Dendritic cell treated with granulocyte-macrophage colony-stimulating factor and Interleukin-4, amounts not matched to agents 40 ng/mL and 50 ng/mL, for 4 days (primary cell): ENCODE measurements at regions of chr16 and their contacts with region 1.

Region 1: DNA sequence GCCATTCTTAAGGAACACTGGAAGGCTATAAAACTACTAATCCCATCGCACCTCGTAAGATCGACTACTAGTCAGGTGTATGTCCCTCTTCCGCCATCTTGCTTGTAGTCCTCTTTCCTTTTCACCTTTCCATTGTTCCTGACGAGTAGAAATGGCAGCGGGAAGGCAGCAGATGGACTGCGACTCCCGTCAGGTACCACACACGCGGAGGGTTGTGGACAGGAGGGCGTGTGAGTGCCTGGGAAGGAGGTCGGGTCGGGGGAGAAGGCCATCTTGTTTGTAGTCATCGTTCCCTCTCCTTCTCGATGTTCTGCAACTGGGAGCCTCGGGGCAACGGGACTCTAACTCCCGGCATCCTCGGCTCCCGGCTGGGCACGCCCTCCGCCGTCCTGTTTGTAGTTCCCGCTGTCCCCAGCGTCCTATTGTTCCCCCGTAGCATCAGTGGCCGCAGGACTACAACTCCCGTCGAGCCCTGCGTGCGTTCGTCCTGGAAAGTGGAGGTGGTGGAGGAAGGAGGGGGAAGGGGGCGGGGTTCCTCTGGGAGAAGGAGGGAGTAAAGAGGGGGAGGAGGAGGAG is 324 bp upstream of the FBXL19 start:
- H3K4me3 Mint-ChIP-seq: peak overlapping the region; percentile 90
- H3K27ac Mint-ChIP-seq: peak overlapping the region; percentile 96
- H3K4me1 Mint-ChIP-seq: peaks cover 50% of the 10 kb centered on the region
- H3K27me3 Mint-ChIP-seq: no peaks in the 10 kb centered on the region

Region 2: DNA sequence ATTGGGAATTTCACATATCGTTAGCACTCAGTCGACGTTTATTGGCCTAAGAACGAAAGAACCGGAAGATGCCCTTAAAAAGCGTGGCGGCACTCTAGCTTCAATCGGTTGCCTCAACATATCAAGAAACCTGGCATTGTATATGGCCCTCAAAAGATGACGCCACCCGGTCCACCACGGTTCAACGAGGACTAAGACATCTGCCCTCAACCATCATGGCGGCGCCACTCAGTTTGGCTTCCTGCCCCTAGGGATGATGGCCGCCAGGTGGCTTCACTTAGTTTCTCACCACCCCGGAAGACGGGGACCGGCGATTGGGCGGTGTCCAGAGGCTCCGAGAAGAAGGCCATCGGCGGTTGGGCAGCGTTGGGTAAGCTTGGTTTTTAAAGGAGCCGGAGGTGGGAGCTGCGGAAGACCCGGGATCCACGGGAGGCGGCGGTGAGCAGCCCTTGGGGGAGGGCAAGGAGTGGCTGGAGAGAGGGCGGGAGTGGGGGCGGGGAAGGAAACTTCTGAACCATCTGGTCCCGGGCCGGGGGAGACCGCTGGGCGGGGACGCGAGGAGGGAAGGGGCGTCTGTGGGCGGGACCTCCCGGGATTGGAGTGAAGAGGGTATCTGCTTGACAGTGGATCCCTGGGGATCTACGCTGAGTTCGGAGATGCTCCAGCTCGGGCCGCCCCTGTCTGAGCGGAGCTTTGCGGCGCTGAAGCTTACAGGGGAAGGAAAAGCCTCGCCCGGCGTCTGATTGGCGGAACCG is 272.5 kb before region 1 on chr16 and contains the start of gene PRR14:
- intact Hi-C with region 1: loop called (anchors 2 kb)
- H3K4me3 Mint-ChIP-seq: peak within 1 kb of the TSS; percentile 90
- H3K27ac Mint-ChIP-seq: peak within 1 kb of the TSS; percentile 99
- H3K4me1 Mint-ChIP-seq: peaks cover 43% of the 10 kb centered on the region
- H3K27me3 Mint-ChIP-seq: no peaks in the 10 kb centered on the region

Region 3: DNA sequence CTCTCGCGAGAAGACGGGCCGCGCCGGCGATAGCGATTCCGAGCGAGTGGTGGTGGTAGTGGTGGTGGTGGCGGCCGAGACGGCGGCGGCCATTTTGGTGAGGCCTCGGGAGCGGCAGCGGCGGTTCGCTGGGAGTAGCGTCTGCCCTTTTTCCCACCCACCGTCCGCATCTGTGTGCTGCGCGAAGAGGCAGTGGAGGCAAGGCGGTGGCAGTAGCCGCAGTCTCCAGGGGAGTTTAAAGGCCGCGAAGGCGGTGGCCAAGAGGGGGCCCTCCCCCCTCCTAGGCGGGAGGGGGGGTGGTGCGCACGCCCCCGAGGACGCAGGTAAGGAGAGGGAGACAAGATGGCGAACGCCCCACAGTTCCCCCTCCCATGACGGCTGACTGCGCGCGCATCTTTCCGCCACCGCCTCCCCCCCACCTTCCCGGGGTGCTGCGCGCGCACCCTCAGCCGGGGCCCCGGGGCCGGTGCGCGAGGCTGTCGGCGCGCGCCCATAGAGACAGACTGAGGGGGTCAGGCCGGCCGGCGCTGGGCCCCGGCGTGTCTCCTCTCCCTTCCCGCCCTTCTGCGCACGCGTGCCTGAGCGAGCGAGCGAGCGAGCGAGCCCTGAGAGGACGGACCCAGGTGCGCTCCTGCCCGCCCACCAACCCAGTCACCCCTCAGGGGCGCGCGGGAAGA is 224.8 kb before region 1 on chr16:
- intact Hi-C with region 1: loop called (anchors 2 kb)
- H3K4me3 Mint-ChIP-seq: peak overlapping the region; percentile 79
- H3K27ac Mint-ChIP-seq: peak overlapping the region; percentile 100
- H3K4me1 Mint-ChIP-seq: peaks cover 44% of the 10 kb centered on the region
- H3K27me3 Mint-ChIP-seq: no peaks in the 10 kb centered on the region

Region 4: GRCh38 chr16:30761928-30762810 is 160.9 kb before region 1 on chr16 and contains the starts of genes CFAP119 and RNF40:
- intact Hi-C with region 1: loop called (anchors 2 kb)
- H3K4me3 Mint-ChIP-seq: peak within 1 kb of the TSS; percentile 90
- H3K27ac Mint-ChIP-seq: peak within 1 kb of the TSS; percentile 95
- H3K4me1 Mint-ChIP-seq: peaks cover 59% of the 10 kb centered on the region
- H3K27me3 Mint-ChIP-seq: no peaks in the 10 kb centered on the region

Region 5: GRCh38 chr16:30844671-30845449 is 78.2 kb before region 1 on chr16:
- intact Hi-C with region 1: loop called (anchors 1 kb)
- H3K4me3 Mint-ChIP-seq: no peak overlapping the region
- H3K27ac Mint-ChIP-seq: peak overlapping the region; percentile 78
- H3K4me1 Mint-ChIP-seq: peaks cover 9% of the 10 kb centered on the region
- H3K27me3 Mint-ChIP-seq: no peaks in the 10 kb centered on the region

Region 6: DNA sequence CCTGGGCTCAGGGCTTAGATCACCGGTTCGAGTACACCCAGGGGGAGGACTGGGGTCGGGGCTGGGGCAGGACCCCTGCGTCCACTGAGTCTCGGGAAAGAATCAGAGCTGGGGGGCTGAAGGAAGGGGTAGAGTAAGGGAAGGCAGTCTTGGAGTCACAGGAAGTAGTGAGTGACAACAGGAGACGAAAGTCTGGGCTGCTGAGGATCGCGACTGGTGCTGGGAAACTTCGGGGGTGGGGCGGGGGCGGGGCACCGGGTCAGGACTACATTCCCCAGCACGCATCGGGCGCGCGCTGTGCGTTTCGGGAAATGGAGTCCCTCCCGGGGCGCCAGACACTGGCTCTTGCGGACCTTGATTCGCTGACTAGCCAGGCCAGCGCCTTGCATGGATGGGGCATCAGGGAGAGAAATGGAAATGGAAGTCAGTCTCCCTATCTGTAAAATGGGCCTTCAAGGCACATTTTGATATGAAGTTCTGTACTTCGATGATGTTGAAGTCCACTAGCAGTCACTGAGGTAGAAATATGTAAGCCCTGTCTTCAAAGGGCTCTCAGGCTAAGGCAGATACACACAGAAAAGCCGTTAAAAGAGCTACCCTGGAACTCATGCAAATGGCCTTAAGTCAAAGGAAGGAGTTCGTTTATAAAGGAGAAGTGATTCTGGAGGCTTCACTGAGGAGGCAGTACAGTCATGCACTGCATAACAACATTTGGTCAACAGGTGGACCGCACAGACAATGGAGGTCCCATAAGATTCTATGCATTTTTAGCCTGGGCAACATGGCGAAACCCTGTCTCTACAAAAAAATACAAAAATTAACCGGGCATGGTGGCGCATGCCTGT is 25.9 kb before region 1 on chr16:
- intact Hi-C with region 1: loop called (anchors 1 kb)
- H3K4me3 Mint-ChIP-seq: peak overlapping the region; percentile 84
- H3K27ac Mint-ChIP-seq: peak overlapping the region; percentile 99
- H3K4me1 Mint-ChIP-seq: peaks cover 59% of the 10 kb centered on the region
- H3K27me3 Mint-ChIP-seq: no peaks in the 10 kb centered on the region

Region 7: GRCh38 chr16:30948667-30949649 is 25.9 kb after region 1 on chr16 and contains the start of gene ORAI3:
- intact Hi-C with region 1: loop called (anchors 2 kb)
- H3K4me3 Mint-ChIP-seq: peak within 1 kb of the TSS; percentile 98
- H3K27ac Mint-ChIP-seq: peak within 1 kb of the TSS; percentile 92
- H3K4me1 Mint-ChIP-seq: peaks cover 36% of the 10 kb centered on the region
- H3K27me3 Mint-ChIP-seq: no peaks in the 10 kb centered on the region

Region 8: GRCh38 chr16:30984669-30985400 is 61.8 kb after region 1 on chr16 and contains the start of gene HSD3B7:
- intact Hi-C with region 1: no loop called
- H3K4me3 Mint-ChIP-seq: peak within 1 kb of the TSS; percentile 86
- H3K27ac Mint-ChIP-seq: peak within 1 kb of the TSS; percentile 88
- H3K4me1 Mint-ChIP-seq: peaks cover 41% of the 10 kb centered on the region
- H3K27me3 Mint-ChIP-seq: no peaks in the 10 kb centered on the region